PC-3 (cell line): ENCODE measurements at regions of chr4 and their contacts with region 1.

Region 1: DNA sequence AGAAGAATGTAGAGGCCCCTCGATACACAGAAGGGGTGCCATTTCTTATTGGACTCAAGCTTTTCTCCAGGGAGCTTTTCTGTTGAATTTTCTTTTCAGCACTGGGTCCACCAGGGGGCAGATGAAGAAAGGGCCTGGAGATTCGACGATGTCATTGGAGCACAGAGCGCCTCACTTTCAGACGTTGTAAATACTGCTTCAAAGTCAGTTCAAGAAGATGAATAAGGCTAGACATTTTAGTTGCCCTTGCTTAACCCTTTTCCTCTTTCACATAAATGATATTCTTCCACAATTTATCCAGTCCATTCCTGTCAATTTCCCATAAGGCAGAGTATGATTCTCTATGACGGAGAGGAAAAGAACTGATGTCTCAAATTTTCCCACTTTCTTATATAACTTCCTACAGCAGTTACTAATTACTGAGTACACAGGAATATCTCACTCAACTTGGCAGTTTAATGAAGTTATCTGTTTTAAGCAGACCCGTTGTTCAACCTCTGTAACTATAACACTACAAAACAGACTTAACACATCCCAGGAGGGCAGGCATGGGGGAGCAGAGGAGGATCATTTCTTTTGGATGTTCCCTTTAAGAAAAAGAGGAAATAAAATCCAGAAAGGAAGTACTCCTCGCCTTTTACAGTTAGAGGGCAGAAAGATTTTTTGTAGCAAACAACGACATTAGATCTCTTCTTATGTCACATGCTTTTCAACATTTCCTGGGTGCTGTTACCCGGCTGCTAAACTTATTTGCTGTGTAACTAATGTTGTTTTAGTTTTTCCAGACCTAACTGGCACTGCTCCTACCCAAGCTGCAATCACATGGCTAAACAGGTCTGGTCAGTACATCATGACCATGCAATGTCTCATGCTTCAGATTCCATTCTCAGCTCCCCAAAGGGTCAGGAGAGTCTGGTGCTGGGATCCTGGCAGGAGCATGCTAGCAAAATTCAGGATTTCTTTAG is 12.2 kb upstream of the CENPU start:
- DNase-seq: peak; percentile 82
- ATAC-seq: peak; percentile 82
- H3K4me3 ChIP-seq: peak overlapping the region; percentile 37
- H3K27ac ChIP-seq: peak overlapping the region; percentile 66
- H3K4me1 ChIP-seq: peaks cover 20% of the 10 kb centered on the region
- H3K27me3 ChIP-seq: no peaks in the 10 kb centered on the region
- CTCF ChIP-seq: peak; percentile 79

Region 2: DNA sequence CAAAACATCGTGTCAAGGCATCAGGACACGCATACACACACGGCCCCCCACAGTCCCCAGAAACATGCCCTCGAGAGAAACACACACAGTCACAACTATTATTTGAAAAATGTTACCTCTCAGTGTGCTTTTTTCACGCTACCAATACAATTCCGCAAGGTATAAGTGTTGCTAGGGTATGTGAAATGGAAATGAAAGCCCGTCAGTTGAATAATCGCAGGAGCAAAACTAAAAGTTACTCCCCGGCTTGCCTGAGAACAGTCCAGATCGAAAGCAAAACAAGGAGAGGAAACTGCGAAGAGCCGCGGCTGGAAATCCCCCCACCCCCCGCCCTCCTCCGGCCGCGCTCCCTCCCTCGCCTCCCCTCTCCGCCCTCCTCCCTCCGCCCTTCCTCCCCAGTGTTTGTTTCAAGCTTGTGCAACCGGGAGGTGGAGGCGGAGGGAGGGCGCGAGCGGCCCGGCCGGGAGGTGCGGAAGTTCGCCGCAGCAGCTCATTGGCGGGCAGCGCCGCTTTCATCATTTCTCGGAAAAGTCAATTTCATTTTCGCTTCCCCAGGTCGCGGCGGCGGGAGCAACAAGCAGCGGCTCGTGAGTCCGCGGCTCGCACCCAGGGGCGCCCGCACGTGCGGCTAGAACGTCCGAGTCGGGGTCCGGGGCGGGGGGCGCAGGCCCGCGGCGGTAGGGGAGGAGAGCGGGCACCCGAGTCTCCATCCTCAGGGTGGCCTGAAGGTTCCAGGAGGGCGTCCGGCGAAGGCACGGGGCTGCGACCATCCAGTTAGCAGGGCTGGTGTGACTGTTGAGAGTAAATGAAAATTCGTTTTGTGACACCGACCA is 271.6 kb before region 1 on chr4 and contains the start of gene IRF2:
- CTCF ChIA-PET with region 1: no interaction called
- POLR2A ChIA-PET with region 1: no interaction called
- intact Hi-C with region 1: no loop called
- DNase-seq: peak; percentile 90
- ATAC-seq: peak; percentile 66
- H3K4me3 ChIP-seq: peak within 1 kb of the TSS; percentile 99
- H3K27ac ChIP-seq: peak within 1 kb of the TSS; percentile 84
- H3K4me1 ChIP-seq: peaks cover 16% of the 10 kb centered on the region; the same call in 1 of the 2 replicates
- H3K27me3 ChIP-seq: no peaks in the 10 kb centered on the region
- CTCF ChIP-seq: no peak
- total RNA-seq, gene IRF2: 7.7 TPM in 2 replicates

Region 3: GRCh38 chr4:184649026-184649970 is 96.8 kb before region 1 on chr4 and contains the starts of genes CASP3 and PRIMPOL:
- CTCF ChIA-PET with region 1: interaction called, 3 read pairs
- POLR2A ChIA-PET with region 1: no interaction called
- intact Hi-C with region 1: loop called (anchors 5 kb)
- DNase-seq: peak; percentile 89
- ATAC-seq: peak; percentile 82
- H3K4me3 ChIP-seq: peak within 1 kb of the TSS; percentile 93
- H3K27ac ChIP-seq: peak within 1 kb of the TSS; percentile 57
- H3K4me1 ChIP-seq: peaks cover 21% of the 10 kb centered on the region
- H3K27me3 ChIP-seq: no peaks in the 10 kb centered on the region
- CTCF ChIP-seq: 0 out of 2 replicates have a peak, but pooled peaks have one; percentile 7
- total RNA-seq, gene CASP3: 11.1 and 13.2 TPM in 2 replicates
- total RNA-seq, gene PRIMPOL: 9.3 and 9.4 TPM in 2 replicates

Region 4: DNA sequence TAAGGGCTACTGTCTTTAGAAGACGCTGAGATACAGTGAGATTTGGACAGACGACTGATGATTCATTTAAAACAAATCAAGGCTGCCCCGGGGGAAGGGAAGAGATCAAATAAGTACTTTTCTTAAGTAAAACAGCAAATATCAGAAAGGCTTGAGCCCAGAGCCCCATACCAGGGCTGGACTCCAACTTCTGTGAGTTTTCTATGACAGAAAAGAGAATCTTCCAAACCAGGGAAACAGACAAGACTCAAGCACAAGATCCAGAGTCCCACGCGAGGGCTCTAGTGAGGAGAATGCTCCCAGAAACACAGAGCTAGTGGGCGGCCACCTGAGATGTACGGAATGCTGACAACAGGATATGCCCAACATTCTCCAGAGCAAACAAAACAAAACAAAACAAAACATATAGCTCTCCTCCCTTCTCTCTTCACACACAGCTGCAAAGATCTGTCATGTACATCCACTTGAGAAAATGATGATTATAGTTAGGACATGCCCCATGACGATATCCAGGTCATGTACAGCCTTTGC is 66.6 kb after region 1 on chr4:
- CTCF ChIA-PET with region 1: no interaction called
- POLR2A ChIA-PET with region 1: no interaction called
- intact Hi-C with region 1: no loop called
- DNase-seq: peak; percentile 61
- ATAC-seq: peak; percentile 51
- H3K4me3 ChIP-seq: peak overlapping the region; percentile 32; the same call in 1 of the 2 replicates
- H3K27ac ChIP-seq: peak overlapping the region; percentile 49
- H3K4me1 ChIP-seq: peaks cover 55% of the 10 kb centered on the region
- H3K27me3 ChIP-seq: no peaks in the 10 kb centered on the region
- CTCF ChIP-seq: no peak

Region 5: DNA sequence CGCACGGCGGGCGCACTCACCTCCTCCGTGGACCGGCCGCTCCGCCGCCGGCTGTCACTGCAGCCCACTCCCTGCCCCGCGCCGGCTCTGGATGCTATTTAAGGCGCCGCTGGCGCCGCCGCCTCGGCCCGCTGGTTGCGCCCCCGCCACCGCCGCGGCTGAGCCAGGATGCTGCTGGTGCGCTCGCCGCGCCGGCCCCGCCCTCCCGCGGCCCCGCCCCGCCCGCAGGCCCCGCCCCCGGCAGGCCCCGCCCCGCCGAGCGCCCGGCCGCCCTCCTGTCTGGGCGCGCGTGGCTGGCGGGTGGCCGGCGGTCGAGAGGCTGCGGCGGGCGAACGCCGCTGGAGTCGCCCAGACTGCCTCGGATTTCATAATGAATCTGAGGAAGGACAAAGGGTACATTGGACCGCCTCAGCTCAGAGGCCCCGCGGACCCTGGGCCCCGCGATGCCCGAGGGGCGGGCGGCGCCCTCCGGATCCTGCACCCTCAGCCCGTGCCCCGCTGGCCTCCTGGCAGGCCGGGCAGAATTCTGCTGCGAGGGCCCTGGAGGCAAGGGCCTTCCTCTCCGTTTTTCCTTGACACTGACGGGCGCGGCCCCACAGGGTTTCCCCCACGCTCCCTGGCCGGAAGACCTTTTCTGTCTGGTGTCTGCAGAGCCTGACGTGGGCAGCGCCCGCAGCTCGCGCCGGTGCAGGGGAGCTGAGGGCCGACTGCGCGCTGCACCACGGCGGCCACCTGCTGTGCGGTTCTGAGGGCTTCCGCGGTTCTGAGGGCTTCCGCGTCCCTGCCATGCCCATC is 80.0 kb after region 1 on chr4 and contains the start of gene ACSL1:
- CTCF ChIA-PET with region 1: interaction called, 4 read pairs
- POLR2A ChIA-PET with region 1: no interaction called
- intact Hi-C with region 1: loop called (anchors 5 kb)
- DNase-seq: peak; percentile 58
- ATAC-seq: peak; percentile 75
- H3K4me3 ChIP-seq: peak within 1 kb of the TSS; percentile 80
- H3K27ac ChIP-seq: no peak within 1 kb of the TSS
- H3K4me1 ChIP-seq: peaks cover 14% of the 10 kb centered on the region
- H3K27me3 ChIP-seq: no peaks in the 10 kb centered on the region
- CTCF ChIP-seq: no peak
- total RNA-seq, gene ACSL1: 20.0 and 22.9 TPM in 2 replicates

Region 6: DNA sequence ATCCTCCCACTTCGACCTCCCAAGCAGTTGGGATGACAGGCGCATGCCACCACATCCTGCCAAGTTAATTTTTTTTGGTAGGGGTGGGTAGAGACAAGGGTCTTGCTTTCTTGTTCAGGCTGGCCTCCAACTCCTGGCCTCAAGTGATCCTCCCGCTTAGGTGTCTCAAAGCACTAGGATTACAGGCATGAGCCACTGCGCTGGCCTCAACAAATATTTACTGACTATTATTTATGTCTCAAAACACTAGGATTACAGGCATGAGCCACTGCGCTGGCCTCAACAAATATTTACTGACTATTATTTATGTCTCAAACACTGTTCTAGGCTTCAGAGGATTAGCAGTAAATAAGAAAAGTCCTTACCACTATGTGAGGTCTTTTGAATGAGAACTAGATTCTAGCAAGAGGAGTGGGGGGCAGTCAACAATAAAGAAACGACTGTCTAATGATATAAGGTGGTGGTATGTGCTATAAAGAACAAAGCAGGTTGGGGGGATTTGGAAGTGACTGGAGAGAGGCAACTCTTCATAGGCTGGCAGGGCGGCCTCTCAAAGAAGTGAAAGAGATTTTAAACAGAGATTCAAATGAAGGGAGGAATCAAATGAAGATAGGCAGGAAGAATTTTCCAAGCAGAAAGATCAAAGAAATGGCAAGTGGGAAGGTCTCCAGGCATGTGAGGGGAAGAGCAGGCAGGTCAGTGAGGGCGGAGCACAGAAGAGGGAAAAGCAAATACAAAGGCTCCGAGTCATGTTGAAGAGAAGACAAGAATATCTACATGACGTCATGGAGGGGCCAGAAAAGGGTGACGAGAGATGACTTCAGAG is 92.3 kb after region 1 on chr4:
- CTCF ChIA-PET with region 1: no interaction called
- POLR2A ChIA-PET with region 1: no interaction called
- intact Hi-C with region 1: loop called (anchors 5 kb)
- DNase-seq: peak; percentile 49
- ATAC-seq: peak; percentile 98
- H3K4me3 ChIP-seq: peak overlapping the region; percentile 40
- H3K27ac ChIP-seq: peak overlapping the region; percentile 84
- H3K4me1 ChIP-seq: peaks cover 12% of the 10 kb centered on the region
- H3K27me3 ChIP-seq: no peaks in the 10 kb centered on the region
- CTCF ChIP-seq: no peak

Region 7: DNA sequence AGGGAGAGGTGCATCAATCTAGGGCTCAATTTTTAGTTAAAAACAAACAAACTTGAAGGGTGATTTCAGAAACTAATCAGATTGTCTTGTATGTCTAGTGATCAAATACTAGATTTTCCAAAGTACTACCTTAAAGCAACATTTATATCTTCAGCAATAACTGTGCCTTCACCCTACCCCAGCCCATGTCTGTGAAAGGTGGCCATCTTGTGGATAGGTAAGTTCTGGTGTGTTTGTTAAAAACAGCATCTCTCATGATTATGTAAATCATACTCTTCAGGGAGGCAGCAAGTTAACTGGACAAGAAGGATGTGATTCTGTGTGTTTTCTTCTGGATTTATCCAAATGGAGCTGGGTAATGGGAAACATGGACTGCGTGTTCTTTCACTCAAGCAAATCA is 161.1 kb after region 1 on chr4:
- CTCF ChIA-PET with region 1: no interaction called
- POLR2A ChIA-PET with region 1: no interaction called
- intact Hi-C with region 1: loop called (anchors 1 kb)
- DNase-seq: no peak
- ATAC-seq: no peak
- H3K4me3 ChIP-seq: no peak overlapping the region
- H3K27ac ChIP-seq: no peak overlapping the region
- H3K4me1 ChIP-seq: peaks cover 8% of the 10 kb centered on the region; the same call in 1 of the 2 replicates
- H3K27me3 ChIP-seq: no peaks in the 10 kb centered on the region
- CTCF ChIP-seq: 0 out of 2 replicates have a peak, but pooled peaks have one; percentile 21

Region 8: DNA sequence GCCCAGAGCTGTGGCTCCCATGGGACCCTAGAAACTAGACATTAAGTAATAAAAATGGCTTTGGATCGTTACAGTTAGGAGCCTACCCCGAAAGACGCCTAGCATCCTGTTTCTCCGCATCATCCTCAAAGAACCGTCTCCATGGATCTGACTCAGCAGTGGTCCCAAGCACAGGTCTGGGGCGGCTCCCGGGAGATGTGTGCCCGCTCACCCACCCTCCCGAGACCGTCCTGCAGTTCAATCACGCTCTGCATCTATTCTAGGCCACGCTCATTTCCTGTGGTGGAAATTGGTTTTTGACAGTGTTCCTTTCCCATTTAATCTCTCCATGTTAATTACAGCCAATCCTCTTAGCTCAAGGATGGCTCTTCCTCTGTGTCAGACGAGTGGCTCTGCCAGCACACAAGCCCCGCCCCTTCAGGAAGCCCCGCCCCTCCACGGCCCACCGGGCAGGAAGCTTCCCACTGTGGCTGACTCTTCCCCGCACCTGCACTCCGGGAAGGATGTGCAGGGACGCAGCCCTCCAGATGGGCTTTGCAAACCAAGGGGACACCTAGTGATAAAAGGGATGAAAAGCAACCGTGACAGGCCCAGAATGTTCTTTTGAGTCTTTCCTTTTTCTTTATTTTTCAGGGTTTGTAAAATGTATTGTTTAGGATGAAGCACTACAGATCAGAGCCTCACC is 237.7 kb after region 1 on chr4:
- CTCF ChIA-PET with region 1: interaction called, 6 read pairs
- POLR2A ChIA-PET with region 1: no interaction called
- intact Hi-C with region 1: loop called (anchors 1 kb)
- DNase-seq: peak; percentile 70
- ATAC-seq: peak; percentile 83
- H3K4me3 ChIP-seq: no peak overlapping the region
- H3K27ac ChIP-seq: no peak overlapping the region
- H3K4me1 ChIP-seq: peaks cover 14% of the 10 kb centered on the region
- H3K27me3 ChIP-seq: 0 out of 2 replicates have a peak, but pooled peaks cover 3% of the 10 kb centered on the region
- CTCF ChIP-seq: peak; percentile 62

Region 9: GRCh38 chr4:185005216-185005819 is 259.2 kb after region 1 on chr4:
- CTCF ChIA-PET with region 1: no interaction called
- POLR2A ChIA-PET with region 1: no interaction called
- intact Hi-C with region 1: loop called (anchors 5 kb)
- DNase-seq: peak; percentile 87
- ATAC-seq: peak; percentile 95
- H3K4me3 ChIP-seq: peak overlapping the region; percentile 62
- H3K27ac ChIP-seq: no peak overlapping the region
- H3K4me1 ChIP-seq: peaks cover 2% of the 10 kb centered on the region; the same call in 1 of the 2 replicates
- H3K27me3 ChIP-seq: peaks cover 22% of the 10 kb centered on the region
- CTCF ChIP-seq: peak; percentile 88

Region 10: GRCh38 chr4:185708348-185708747 is 962.2 kb after region 1 on chr4:
- CTCF ChIA-PET with region 1: no interaction called
- POLR2A ChIA-PET with region 1: no interaction called
- intact Hi-C with region 1: no loop called
- DNase-seq: peak; percentile 58
- ATAC-seq: peak; percentile 70
- H3K4me3 ChIP-seq: no peak overlapping the region
- H3K27ac ChIP-seq: peak overlapping the region; percentile 55
- H3K4me1 ChIP-seq: peaks cover 14% of the 10 kb centered on the region; the same call in 1 of the 2 replicates
- H3K27me3 ChIP-seq: no peaks in the 10 kb centered on the region
- CTCF ChIP-seq: no peak